ENCODE measurements at regions of chr10 and their contacts with region 1.

Region 1: DNA sequence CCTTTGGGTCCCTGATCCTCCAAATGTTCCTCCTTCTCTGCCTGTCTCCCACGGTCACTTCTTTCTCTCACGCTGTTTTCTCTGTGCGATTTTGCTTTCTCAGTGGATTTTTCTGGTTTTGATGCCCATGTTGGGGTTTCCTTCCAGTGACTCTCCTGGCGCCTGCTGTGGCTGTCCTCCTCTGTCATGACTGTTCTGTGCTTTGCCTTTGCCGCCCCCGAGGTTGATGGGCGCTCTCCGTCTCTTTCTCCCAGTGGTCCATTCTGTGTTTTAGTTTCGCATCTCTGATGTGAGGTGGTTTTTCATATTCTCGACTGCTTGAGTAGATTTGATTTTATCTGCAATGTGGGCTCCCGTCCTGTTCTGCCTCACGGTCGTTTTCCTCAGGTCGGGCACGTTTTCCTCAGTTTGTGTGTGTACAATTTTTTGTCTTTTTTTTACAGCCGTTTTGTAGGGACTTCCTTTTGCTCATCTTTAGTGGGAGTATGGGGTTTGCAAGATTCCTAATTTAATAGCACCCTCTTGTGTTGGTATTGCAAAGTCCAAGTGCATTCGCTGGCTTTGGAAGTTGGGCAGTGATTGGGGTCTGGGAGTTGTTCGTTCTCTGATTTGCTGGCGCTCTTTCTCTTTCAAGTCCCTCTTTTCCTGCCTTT is 100.0 kb downstream of the INPP5A start:
- DNase-seq: peak; percentile 22
- H3K4me3 Mint-ChIP-seq: no peak overlapping the region
- H3K27ac Mint-ChIP-seq: no peak overlapping the region
- H3K4me1 Mint-ChIP-seq: peaks cover 17% of the 10 kb centered on the region
- H3K27me3 Mint-ChIP-seq: no peaks in the 10 kb centered on the region

Region 2: GRCh38 chr10:132458593-132459300 is 178.9 kb before region 1 on chr10:
- CTCF ChIA-PET with region 1: interaction called, 16 read pairs
- POLR2A ChIA-PET with region 1: no interaction called
- intact Hi-C with region 1: loop called (anchors 1 kb)
- DNase-seq: peak; percentile 67
- H3K4me3 Mint-ChIP-seq: no peak overlapping the region
- H3K27ac Mint-ChIP-seq: peak overlapping the region; percentile 13
- H3K4me1 Mint-ChIP-seq: peaks cover 2% of the 10 kb centered on the region
- H3K27me3 Mint-ChIP-seq: no peaks in the 10 kb centered on the region

Region 3: GRCh38 chr10:132665946-132666704 is 28.5 kb after region 1 on chr10:
- CTCF ChIA-PET with region 1: no interaction called
- POLR2A ChIA-PET with region 1: no interaction called
- intact Hi-C with region 1: no loop called
- DNase-seq: peak; percentile 55
- H3K4me3 Mint-ChIP-seq: no peak overlapping the region
- H3K27ac Mint-ChIP-seq: no peak overlapping the region
- H3K4me1 Mint-ChIP-seq: peaks cover 12% of the 10 kb centered on the region
- H3K27me3 Mint-ChIP-seq: no peaks in the 10 kb centered on the region

Measured in activated CD4-positive, alpha-beta memory T cell treated with anti-CD3 and anti-CD28 coated beads for 36 hours (primary cell).